SK-N-SH (cell line): ENCODE measurements at regions of chrX and their contacts with region 1.

Region 1: DNA sequence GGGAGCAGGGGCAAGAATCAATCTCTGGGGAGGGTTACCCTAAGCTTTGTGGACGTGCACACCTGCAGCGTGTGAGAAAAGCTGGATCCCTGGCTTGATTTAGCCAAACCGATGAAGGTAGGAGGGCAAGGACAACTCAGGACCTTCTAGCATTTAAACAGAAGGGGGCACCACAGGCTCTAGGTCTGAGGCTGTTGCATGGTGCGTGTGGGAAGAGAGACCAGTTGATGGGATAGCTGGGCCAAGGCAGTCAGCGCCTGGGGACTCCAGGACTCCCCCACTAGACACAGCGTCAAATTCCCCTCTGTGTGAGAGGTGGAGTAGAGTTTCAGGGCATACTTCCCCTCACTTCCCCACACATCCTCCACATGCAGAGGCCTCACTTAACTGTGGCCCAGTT is 4.3 kb downstream of the GABRQ start:
- DNase-seq: peak; percentile 46
- H3K4me3 ChIP-seq: no peak overlapping the region
- H3K27ac ChIP-seq: no peak overlapping the region
- H3K4me1 ChIP-seq: no peaks in the 10 kb centered on the region; a peak in 1 of 4 replicates
- H3K27me3 ChIP-seq: no peaks in the 10 kb centered on the region; the same call in 1 of the 2 replicates
- CTCF ChIP-seq: peak; percentile 42
- EP300 ChIP-seq: no peak
- RAD21 ChIP-seq: peak; percentile 61

Region 2: GRCh38 chrX:152658302-152658701 is 16.3 kb after region 1 on chrX:
- CTCF ChIA-PET with region 1: interaction called, 21 read pairs
- POLR2A ChIA-PET with region 1: no interaction called
- DNase-seq: peak; percentile 27
- H3K4me3 ChIP-seq: no peak overlapping the region
- H3K27ac ChIP-seq: no peak overlapping the region
- H3K4me1 ChIP-seq: no peaks in the 10 kb centered on the region
- H3K27me3 ChIP-seq: no peaks in the 10 kb centered on the region
- CTCF ChIP-seq: peak; percentile 34
- EP300 ChIP-seq: no peak
- RAD21 ChIP-seq: no peak

Region 3: GRCh38 chrX:152725409-152725808 is 83.4 kb after region 1 on chrX:
- CTCF ChIA-PET with region 1: no interaction called
- POLR2A ChIA-PET with region 1: no interaction called
- DNase-seq: no peak
- H3K4me3 ChIP-seq: no peak overlapping the region
- H3K27ac ChIP-seq: no peak overlapping the region
- H3K4me1 ChIP-seq: no peaks in the 10 kb centered on the region
- H3K27me3 ChIP-seq: no peaks in the 10 kb centered on the region
- CTCF ChIP-seq: no peak
- EP300 ChIP-seq: no peak
- RAD21 ChIP-seq: no peak

Region 4: DNA sequence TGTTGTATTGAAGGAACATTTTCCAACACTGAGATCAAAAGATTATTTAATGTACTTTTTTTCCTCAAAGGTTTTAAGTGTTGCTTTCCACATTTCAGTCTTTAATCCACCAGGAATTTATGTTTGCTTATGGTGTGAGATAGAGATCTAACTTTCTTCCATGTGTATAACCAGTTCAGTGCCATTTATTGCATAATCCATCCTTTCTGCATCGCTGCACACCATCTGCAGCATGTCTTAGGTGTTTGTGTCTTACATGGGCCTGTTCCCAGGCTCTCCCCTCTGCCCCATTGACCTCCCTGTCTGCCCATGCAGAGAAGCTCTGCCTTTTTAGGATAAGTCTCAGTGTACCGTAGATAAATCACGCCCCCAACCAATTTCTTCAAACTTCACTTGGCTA is 219.1 kb after region 1 on chrX:
- CTCF ChIA-PET with region 1: no interaction called
- POLR2A ChIA-PET with region 1: no interaction called
- DNase-seq: no peak
- H3K4me3 ChIP-seq: no peak overlapping the region
- H3K27ac ChIP-seq: no peak overlapping the region
- H3K4me1 ChIP-seq: no peaks in the 10 kb centered on the region
- H3K27me3 ChIP-seq: no peaks in the 10 kb centered on the region
- CTCF ChIP-seq: no peak
- EP300 ChIP-seq: no peak
- RAD21 ChIP-seq: no peak